ENCODE measurements at regions of chr10 and their contacts with region 1.

Region 1: GRCh38 chr10:77710759-77711682 is 73.4 kb upstream of the KCNMA1 start:
- DNase-seq: peak; percentile 79
- ATAC-seq: peak; percentile 97
- H3K4me3 Mint-ChIP-seq: peak overlapping the region; percentile 53
- H3K27ac Mint-ChIP-seq: no peak overlapping the region
- H3K4me1 Mint-ChIP-seq: peaks cover 5% of the 10 kb centered on the region
- H3K27me3 Mint-ChIP-seq: peaks cover 25% of the 10 kb centered on the region
- CTCF ChIP-seq: peak; percentile 93

Region 2: GRCh38 chr10:77165445-77166208 is 545.4 kb before region 1 on chr10:
- CTCF ChIA-PET with region 1: interaction called, 35 read pairs
- POLR2A ChIA-PET with region 1: no interaction called
- intact Hi-C with region 1: loop called (anchors 5 kb)
- DNase-seq: peak; percentile 49
- ATAC-seq: peak; percentile 70
- H3K4me3 Mint-ChIP-seq: no peak overlapping the region
- H3K27ac Mint-ChIP-seq: no peak overlapping the region
- H3K4me1 Mint-ChIP-seq: no peaks in the 10 kb centered on the region
- H3K27me3 Mint-ChIP-seq: peaks cover 24% of the 10 kb centered on the region
- CTCF ChIP-seq: peak; percentile 76

Region 3: GRCh38 chr10:77641788-77642397 is 69.1 kb before region 1 on chr10:
- CTCF ChIA-PET with region 1: interaction called, 15 read pairs
- POLR2A ChIA-PET with region 1: no interaction called
- intact Hi-C with region 1: no loop called
- DNase-seq: peak; percentile 76
- ATAC-seq: no peak
- H3K4me3 Mint-ChIP-seq: no peak overlapping the region
- H3K27ac Mint-ChIP-seq: no peak overlapping the region
- H3K4me1 Mint-ChIP-seq: peaks cover 4% of the 10 kb centered on the region
- H3K27me3 Mint-ChIP-seq: peaks cover 36% of the 10 kb centered on the region
- CTCF ChIP-seq: peak; percentile 80

Region 4: GRCh38 chr10:77685432-77685831 is 25.6 kb before region 1 on chr10:
- CTCF ChIA-PET with region 1: interaction called, 11 read pairs
- POLR2A ChIA-PET with region 1: no interaction called
- intact Hi-C with region 1: no loop called
- DNase-seq: no peak
- ATAC-seq: no peak
- H3K4me3 Mint-ChIP-seq: no peak overlapping the region
- H3K27ac Mint-ChIP-seq: no peak overlapping the region
- H3K4me1 Mint-ChIP-seq: no peaks in the 10 kb centered on the region
- H3K27me3 Mint-ChIP-seq: peaks cover 11% of the 10 kb centered on the region
- CTCF ChIP-seq: no peak

Region 5: DNA sequence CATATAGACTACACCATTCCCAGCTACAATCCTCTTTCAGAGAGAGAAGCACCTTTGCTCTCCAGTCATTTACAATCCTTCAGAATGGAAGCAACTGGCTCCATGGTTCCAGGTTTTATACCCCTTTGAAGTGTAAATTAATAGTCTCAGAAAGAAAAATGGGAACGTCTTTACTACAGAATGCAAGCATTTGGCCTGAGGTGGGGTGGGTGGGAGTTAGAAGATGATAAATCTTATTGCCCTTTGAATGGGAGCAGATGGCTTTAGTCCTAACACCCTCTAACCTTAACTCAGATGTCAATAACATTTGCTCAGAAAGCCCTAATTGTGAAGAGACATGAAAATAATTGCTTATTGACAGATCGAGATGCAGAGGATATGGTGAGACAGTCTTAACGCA is 10.8 kb after region 1 on chr10:
- CTCF ChIA-PET with region 1: interaction called, 19 read pairs
- POLR2A ChIA-PET with region 1: no interaction called
- intact Hi-C with region 1: no loop called
- DNase-seq: no peak
- ATAC-seq: no peak
- H3K4me3 Mint-ChIP-seq: no peak overlapping the region
- H3K27ac Mint-ChIP-seq: no peak overlapping the region
- H3K4me1 Mint-ChIP-seq: peaks cover 2% of the 10 kb centered on the region
- H3K27me3 Mint-ChIP-seq: peaks cover 1% of the 10 kb centered on the region
- CTCF ChIP-seq: no peak

Region 6: GRCh38 chr10:77820349-77820748 is 109.3 kb after region 1 on chr10:
- CTCF ChIA-PET with region 1: no interaction called
- POLR2A ChIA-PET with region 1: no interaction called
- intact Hi-C with region 1: no loop called
- DNase-seq: peak; percentile 47
- ATAC-seq: peak; percentile 81
- H3K4me3 Mint-ChIP-seq: no peak overlapping the region
- H3K27ac Mint-ChIP-seq: peak overlapping the region; percentile 77
- H3K4me1 Mint-ChIP-seq: peaks cover 8% of the 10 kb centered on the region
- H3K27me3 Mint-ChIP-seq: no peaks in the 10 kb centered on the region
- CTCF ChIP-seq: no peak

Region 7: GRCh38 chr10:77865629-77866360 is 154.8 kb after region 1 on chr10:
- CTCF ChIA-PET with region 1: no interaction called
- POLR2A ChIA-PET with region 1: no interaction called
- intact Hi-C with region 1: no loop called
- DNase-seq: no peak
- ATAC-seq: no peak
- H3K4me3 Mint-ChIP-seq: no peak overlapping the region
- H3K27ac Mint-ChIP-seq: no peak overlapping the region
- H3K4me1 Mint-ChIP-seq: no peaks in the 10 kb centered on the region
- H3K27me3 Mint-ChIP-seq: no peaks in the 10 kb centered on the region
- CTCF ChIP-seq: no peak